Calu3 (cell line): ENCODE measurements at regions of chr7 and their contacts with region 1.

Region 1: GRCh38 chr7:17009007-17009719 is 127.4 kb upstream of the AGR3 start:
- DNase-seq: no peak
- H3K4me3 Mint-ChIP-seq: no peak overlapping the region
- H3K27ac Mint-ChIP-seq: peak overlapping the region; percentile 58
- H3K4me1 Mint-ChIP-seq: peaks cover 87% of the 10 kb centered on the region
- H3K27me3 Mint-ChIP-seq: no peaks in the 10 kb centered on the region
- CTCF ChIP-seq: peak; percentile 67

Region 2: GRCh38 chr7:16880554-16880953 is 128.6 kb before region 1 on chr7:
- CTCF ChIA-PET with region 1: no interaction called
- intact Hi-C with region 1: no loop called
- DNase-seq: no peak
- H3K4me3 Mint-ChIP-seq: no peak overlapping the region
- H3K27ac Mint-ChIP-seq: no peak overlapping the region
- H3K4me1 Mint-ChIP-seq: peaks cover 14% of the 10 kb centered on the region
- H3K27me3 Mint-ChIP-seq: no peaks in the 10 kb centered on the region
- CTCF ChIP-seq: no peak

Region 3: DNA sequence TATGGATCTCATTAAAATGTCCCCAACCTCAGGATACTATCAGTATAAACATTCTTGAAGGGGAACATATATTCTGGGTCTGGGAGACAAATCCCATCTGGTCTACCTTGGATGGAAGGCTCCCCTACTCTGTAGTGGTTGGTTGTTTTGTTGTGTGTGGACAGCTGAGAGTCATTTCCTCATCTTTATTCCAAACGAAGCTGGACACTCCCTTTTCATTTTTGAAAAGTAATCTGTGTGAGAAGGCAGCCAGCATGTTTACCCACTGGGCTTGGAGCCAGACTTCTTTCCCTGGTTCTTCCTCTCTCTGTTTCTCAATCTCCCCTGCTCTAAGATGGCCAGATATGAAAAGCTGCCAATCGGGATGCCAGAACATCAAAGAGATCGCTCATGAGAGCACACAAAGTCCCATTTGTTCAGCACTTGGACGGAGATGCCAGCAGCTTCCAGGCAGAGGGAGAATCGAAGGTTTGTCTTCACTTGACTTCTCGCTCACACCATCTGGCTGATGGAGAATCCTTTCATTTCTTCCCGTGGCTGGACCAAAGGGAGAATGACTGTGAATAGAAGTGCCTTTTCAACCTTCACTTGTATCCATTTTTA is 19.3 kb before region 1 on chr7:
- CTCF ChIA-PET with region 1: interaction called, 17 read pairs
- intact Hi-C with region 1: no loop called
- DNase-seq: peak; percentile 95
- H3K4me3 Mint-ChIP-seq: peak overlapping the region; percentile 51
- H3K27ac Mint-ChIP-seq: peak overlapping the region; percentile 100
- H3K4me1 Mint-ChIP-seq: peaks cover 73% of the 10 kb centered on the region
- H3K27me3 Mint-ChIP-seq: no peaks in the 10 kb centered on the region
- CTCF ChIP-seq: no peak

Region 4: GRCh38 chr7:17031906-17032539 is 22.9 kb after region 1 on chr7:
- CTCF ChIA-PET with region 1: interaction called, 7 read pairs
- intact Hi-C with region 1: loop called (anchors 1 kb)
- DNase-seq: peak; percentile 36
- H3K4me3 Mint-ChIP-seq: no peak overlapping the region
- H3K27ac Mint-ChIP-seq: peak overlapping the region; percentile 28
- H3K4me1 Mint-ChIP-seq: peaks cover 32% of the 10 kb centered on the region
- H3K27me3 Mint-ChIP-seq: no peaks in the 10 kb centered on the region
- CTCF ChIP-seq: no peak

Region 5: GRCh38 chr7:17063045-17063383 is 53.9 kb after region 1 on chr7:
- CTCF ChIA-PET with region 1: interaction called, 12 read pairs
- intact Hi-C with region 1: no loop called
- DNase-seq: no peak
- H3K4me3 Mint-ChIP-seq: no peak overlapping the region
- H3K27ac Mint-ChIP-seq: no peak overlapping the region
- H3K4me1 Mint-ChIP-seq: peaks cover 34% of the 10 kb centered on the region
- H3K27me3 Mint-ChIP-seq: no peaks in the 10 kb centered on the region
- CTCF ChIP-seq: peak; percentile 40